Mammary epithelial cell (primary cell): ENCODE measurements at regions of chr6 and their contacts with region 1.

Region 1: DNA sequence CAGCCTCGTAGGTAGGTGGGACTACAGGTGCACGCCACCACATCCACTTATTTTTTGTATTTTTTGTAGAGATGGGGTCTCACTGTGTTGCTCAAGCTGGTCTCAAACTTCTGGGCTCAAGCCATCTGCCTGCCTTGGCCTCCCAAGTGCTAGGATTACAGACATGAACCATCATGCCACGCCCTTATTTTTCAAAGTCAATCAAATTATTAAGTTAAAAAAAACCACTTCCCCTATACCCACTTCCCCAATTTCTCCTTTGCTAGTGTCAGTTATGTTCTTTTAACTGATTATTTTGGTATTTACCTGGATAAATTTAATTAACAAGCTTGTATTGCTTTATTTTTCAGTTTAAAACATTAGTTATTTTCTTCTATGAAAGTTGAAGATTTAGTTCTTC is 49.6 kb downstream of the RIOK1 start:
- DNase-seq: no peak
- H3K4me3 ChIP-seq: no peak overlapping the region
- H3K27ac ChIP-seq: no peak overlapping the region
- H3K4me1 ChIP-seq: no peaks in the 10 kb centered on the region
- H3K27me3 ChIP-seq: no peaks in the 10 kb centered on the region
- CTCF ChIP-seq: no peak

Region 2: GRCh38 chr6:7496266-7496875 is 57.1 kb after region 1 on chr6:
- CTCF ChIA-PET with region 1: no interaction called
- dilution Hi-C with region 1: loop called (anchors 5 kb)
- in situ Hi-C with region 1: no loop called
- intact Hi-C with region 1: no loop called
- DNase-seq: no peak
- H3K4me3 ChIP-seq: no peak overlapping the region
- H3K27ac ChIP-seq: no peak overlapping the region
- H3K4me1 ChIP-seq: no peaks in the 10 kb centered on the region
- H3K27me3 ChIP-seq: no peaks in the 10 kb centered on the region
- CTCF ChIP-seq: no peak

Region 3: DNA sequence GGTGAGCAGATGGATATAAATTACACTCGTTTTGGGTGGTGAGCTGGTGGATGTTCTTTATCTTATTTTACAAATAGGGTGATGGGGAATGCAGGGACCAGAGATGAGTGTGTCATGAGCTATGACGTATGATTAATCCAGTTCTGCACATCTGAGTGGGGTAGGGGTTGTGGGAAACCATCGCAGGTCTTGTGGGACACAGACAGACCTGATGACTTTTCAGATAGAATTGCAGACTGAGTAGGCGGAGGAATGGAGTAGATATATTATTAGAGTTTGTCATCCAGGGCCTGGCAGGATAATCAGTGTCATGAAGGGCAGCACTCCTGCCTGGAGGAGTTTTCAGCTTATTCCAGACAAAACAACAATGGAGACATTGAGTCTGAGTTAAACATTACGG is 89.3 kb after region 1 on chr6:
- CTCF ChIA-PET with region 1: no interaction called
- dilution Hi-C with region 1: no loop called
- in situ Hi-C with region 1: no loop called
- intact Hi-C with region 1: no loop called
- DNase-seq: peak; percentile 97
- H3K4me3 ChIP-seq: no peak overlapping the region
- H3K27ac ChIP-seq: peak overlapping the region; percentile 48
- H3K4me1 ChIP-seq: peaks cover 31% of the 10 kb centered on the region
- H3K27me3 ChIP-seq: no peaks in the 10 kb centered on the region
- CTCF ChIP-seq: no peak